B cell (primary cell): ENCODE measurements at regions of chr1 and their contacts with region 1.

Region 1: DNA sequence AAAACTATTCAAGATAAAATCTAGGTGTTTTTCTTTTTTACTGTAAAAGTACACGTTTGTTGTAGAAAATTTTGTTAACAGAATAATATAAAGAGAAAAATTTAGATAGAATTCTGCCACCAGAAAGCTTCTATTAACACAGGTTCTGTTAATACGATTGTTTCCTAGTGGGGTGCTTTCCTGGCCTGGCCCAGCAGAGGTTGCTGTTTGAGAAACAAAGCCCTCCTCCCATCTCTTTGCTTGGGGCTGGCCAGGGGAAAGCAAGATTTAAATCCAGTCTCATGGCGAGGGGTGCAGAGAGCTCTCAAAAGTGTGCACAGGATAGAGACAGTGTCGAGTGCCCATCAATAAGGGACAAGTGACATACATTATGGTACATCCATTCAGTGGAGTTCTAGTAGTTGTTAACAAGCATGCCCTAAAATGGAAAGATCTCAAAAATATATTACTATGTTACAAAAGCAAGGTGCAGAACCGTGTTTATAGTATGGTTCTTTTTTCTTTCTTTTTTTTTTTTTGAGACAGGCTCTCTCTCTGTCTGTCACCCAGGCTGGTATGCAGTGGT is 14.6 kb upstream of the ACBD3 start:
- DNase-seq: no peak
- ATAC-seq: no peak
- H3K4me3 ChIP-seq: no peak overlapping the region
- H3K4me3 Mint-ChIP-seq: no peak overlapping the region
- H3K27ac ChIP-seq: no peak overlapping the region
- H3K27ac Mint-ChIP-seq: peak overlapping the region; percentile 32
- H3K4me1 ChIP-seq: peaks cover 13 to 17% of the 10 kb centered on the region in 2 donors
- H3K4me1 Mint-ChIP-seq: peaks cover 23% of the 10 kb centered on the region
- H3K27me3 ChIP-seq: no peaks in the 10 kb centered on the region
- H3K27me3 Mint-ChIP-seq: peaks cover 3% of the 10 kb centered on the region
- CTCF ChIP-seq: peak; percentile 22

Region 2: GRCh38 chr1:225962440-225962975 is 238.6 kb before region 1 on chr1:
- CTCF ChIA-PET with region 1: interaction called, 3 read pairs
- POLR2A ChIA-PET with region 1: no interaction called
- intact Hi-C with region 1: loop called (anchors 2 kb)
- DNase-seq: peak; percentile 67
- ATAC-seq: peak; percentile 63
- H3K4me3 ChIP-seq: no peak overlapping the region
- H3K4me3 Mint-ChIP-seq: no peak overlapping the region
- H3K27ac ChIP-seq: no peak overlapping the region
- H3K27ac Mint-ChIP-seq: no peak overlapping the region
- H3K4me1 ChIP-seq: peaks cover 0 to 5% of the 10 kb centered on the region in 2 donors
- H3K4me1 Mint-ChIP-seq: peaks cover 2% of the 10 kb centered on the region
- H3K27me3 ChIP-seq: peaks cover 0 to 7% (median 0%) of the 10 kb centered on the region in 4 experiments
- H3K27me3 Mint-ChIP-seq: no peaks in the 10 kb centered on the region
- CTCF ChIP-seq: peak; percentile 75

Region 3: DNA sequence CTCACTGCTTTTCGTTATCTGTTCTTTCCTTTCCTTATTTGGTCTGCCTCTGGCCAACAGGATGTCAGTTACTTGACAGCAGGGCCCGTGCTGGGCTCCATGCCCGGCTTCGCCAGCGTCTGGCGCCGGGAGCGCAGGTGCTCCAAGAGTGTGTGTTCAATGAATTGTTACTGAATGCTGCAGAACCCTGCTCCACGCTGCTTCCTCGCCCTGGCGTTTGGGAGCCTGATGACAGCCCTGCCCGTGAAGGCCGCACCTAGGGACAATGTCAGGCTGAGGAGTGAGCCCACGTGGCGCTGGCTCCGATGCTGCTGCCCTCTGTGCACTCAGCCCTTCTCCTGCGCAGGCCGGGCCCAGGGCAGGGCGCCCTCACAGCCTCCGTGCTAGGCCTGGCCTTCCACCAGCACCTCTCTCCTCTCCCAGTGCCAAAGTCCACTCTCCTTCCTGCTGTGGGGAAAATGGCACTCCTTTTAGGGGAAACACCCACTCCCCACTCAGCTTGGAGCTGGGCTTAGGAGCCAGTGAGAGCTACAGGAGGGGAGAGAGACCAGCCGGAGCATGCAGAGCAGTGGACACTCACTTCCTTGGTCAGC is 66.0 kb before region 1 on chr1:
- CTCF ChIA-PET with region 1: interaction called, 15 read pairs
- POLR2A ChIA-PET with region 1: interaction called, 3 read pairs
- intact Hi-C with region 1: no loop called
- DNase-seq: no peak
- ATAC-seq: no peak
- H3K4me3 ChIP-seq: no peak overlapping the region
- H3K4me3 Mint-ChIP-seq: no peak overlapping the region
- H3K27ac ChIP-seq: peak overlapping the region in 1 of 2 donors; percentile 57
- H3K27ac Mint-ChIP-seq: peak overlapping the region; percentile 99
- H3K4me1 ChIP-seq: peaks cover 46 to 54% of the 10 kb centered on the region in 2 donors
- H3K4me1 Mint-ChIP-seq: peaks cover 53% of the 10 kb centered on the region
- H3K27me3 ChIP-seq: no peaks in the 10 kb centered on the region
- H3K27me3 Mint-ChIP-seq: no peaks in the 10 kb centered on the region
- CTCF ChIP-seq: no peak

Region 4: DNA sequence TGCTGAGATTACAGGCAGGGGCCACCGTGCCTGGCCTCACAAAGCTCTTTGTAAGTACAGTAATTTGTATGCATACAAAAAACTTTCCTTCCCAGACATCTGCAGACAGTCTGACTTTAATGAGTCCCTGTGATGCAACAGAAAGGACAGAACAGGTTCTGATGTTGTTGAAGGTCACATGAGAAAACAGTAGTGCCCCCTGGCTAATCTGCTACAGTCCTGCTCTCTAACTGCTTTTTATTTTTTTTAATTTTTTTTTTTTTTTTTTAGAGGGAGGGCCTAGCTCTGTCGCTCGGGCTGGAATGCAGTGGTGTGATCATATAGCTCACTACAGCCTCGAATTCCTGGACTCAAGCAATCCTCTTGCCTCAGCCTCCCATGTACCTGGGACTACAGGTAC is 51.3 kb before region 1 on chr1:
- CTCF ChIA-PET with region 1: interaction called, 12 read pairs
- POLR2A ChIA-PET with region 1: interaction called, 8 read pairs
- intact Hi-C with region 1: no loop called
- DNase-seq: peak; percentile 30
- ATAC-seq: peak; percentile 56
- H3K4me3 ChIP-seq: no peak overlapping the region
- H3K4me3 Mint-ChIP-seq: no peak overlapping the region
- H3K27ac ChIP-seq: no peak overlapping the region
- H3K27ac Mint-ChIP-seq: peak overlapping the region; percentile 85
- H3K4me1 ChIP-seq: peaks cover 18 to 26% of the 10 kb centered on the region in 2 donors
- H3K4me1 Mint-ChIP-seq: peaks cover 44% of the 10 kb centered on the region
- H3K27me3 ChIP-seq: no peaks in the 10 kb centered on the region
- H3K27me3 Mint-ChIP-seq: no peaks in the 10 kb centered on the region
- CTCF ChIP-seq: no peak

Region 5: GRCh38 chr1:226223786-226224244 is 22.7 kb after region 1 on chr1:
- CTCF ChIA-PET with region 1: interaction called, 11 read pairs
- POLR2A ChIA-PET with region 1: no interaction called
- intact Hi-C with region 1: no loop called
- DNase-seq: peak; percentile 71
- ATAC-seq: peak; percentile 76
- H3K4me3 ChIP-seq: peak overlapping the region in 4 of 5 experiments; percentile 49 to 65 (median 57)
- H3K4me3 Mint-ChIP-seq: peak overlapping the region; percentile 92
- H3K27ac ChIP-seq: no peak overlapping the region
- H3K27ac Mint-ChIP-seq: peak overlapping the region; percentile 53
- H3K4me1 ChIP-seq: peaks cover 5 to 16% of the 10 kb centered on the region in 2 donors
- H3K4me1 Mint-ChIP-seq: peaks cover 8% of the 10 kb centered on the region
- H3K27me3 ChIP-seq: peaks cover 0 to 28% (median 9%) of the 10 kb centered on the region in 4 experiments
- H3K27me3 Mint-ChIP-seq: peaks cover 8% of the 10 kb centered on the region
- CTCF ChIP-seq: no peak

Region 6: GRCh38 chr1:226332947-226333346 is 131.8 kb after region 1 on chr1:
- CTCF ChIA-PET with region 1: interaction called, 19 read pairs
- POLR2A ChIA-PET with region 1: no interaction called
- intact Hi-C with region 1: loop called (anchors 1 kb)
- DNase-seq: no peak
- ATAC-seq: no peak
- H3K4me3 ChIP-seq: peak overlapping the region in 1 of 5 experiments; percentile 25
- H3K4me3 Mint-ChIP-seq: peak overlapping the region; percentile 27
- H3K27ac ChIP-seq: no peak overlapping the region
- H3K27ac Mint-ChIP-seq: peak overlapping the region; percentile 38
- H3K4me1 ChIP-seq: peaks cover 0 to 7% of the 10 kb centered on the region in 2 donors
- H3K4me1 Mint-ChIP-seq: peaks cover 7% of the 10 kb centered on the region
- H3K27me3 ChIP-seq: no peaks in the 10 kb centered on the region
- H3K27me3 Mint-ChIP-seq: no peaks in the 10 kb centered on the region
- CTCF ChIP-seq: no peak

Region 7: GRCh38 chr1:226863446-226863845 is 662.3 kb after region 1 on chr1:
- CTCF ChIA-PET with region 1: no interaction called
- POLR2A ChIA-PET with region 1: no interaction called
- intact Hi-C with region 1: no loop called
- DNase-seq: no peak
- ATAC-seq: no peak
- H3K4me3 ChIP-seq: no peak overlapping the region
- H3K4me3 Mint-ChIP-seq: no peak overlapping the region
- H3K27ac ChIP-seq: no peak overlapping the region
- H3K27ac Mint-ChIP-seq: no peak overlapping the region
- H3K4me1 ChIP-seq: no peaks in the 10 kb centered on the region
- H3K4me1 Mint-ChIP-seq: no peaks in the 10 kb centered on the region
- H3K27me3 ChIP-seq: peaks cover 0 to 3% (median 0%) of the 10 kb centered on the region in 4 experiments
- H3K27me3 Mint-ChIP-seq: no peaks in the 10 kb centered on the region
- CTCF ChIP-seq: no peak